ENCODE measurements at regions of chr2 and their contacts with region 1.

Region 1: DNA sequence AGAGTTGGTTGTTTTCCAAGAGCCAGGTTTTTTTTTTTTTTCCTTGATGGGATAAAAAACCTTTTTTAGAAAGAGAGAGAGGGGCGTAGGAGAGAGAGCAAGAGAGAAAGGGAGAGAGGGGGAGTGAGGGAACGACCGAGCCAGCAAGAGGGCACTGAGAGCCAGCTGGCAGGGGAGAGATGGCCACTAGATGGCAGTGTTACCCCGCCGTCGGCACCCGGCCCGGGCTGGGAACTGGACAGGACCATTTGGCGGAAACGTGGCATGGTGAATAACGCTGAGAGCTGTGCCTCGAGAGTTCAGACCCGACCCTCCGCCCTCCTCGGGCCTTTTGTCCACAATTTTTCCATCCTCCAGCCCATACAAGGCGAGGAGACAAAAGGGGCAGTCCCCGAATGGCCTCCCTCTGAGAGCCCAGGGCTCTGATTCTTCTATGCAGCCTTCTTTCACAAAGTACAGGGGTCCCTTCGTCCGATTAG is 286.7 kb upstream of the VRK2 start:
- DNase-seq: peak; percentile 61
- CTCF ChIP-seq: peak; percentile 95

Region 2: GRCh38 chr2:57890464-57890863 is 130.6 kb after region 1 on chr2:
- in situ Hi-C with region 1: loop called (anchors 10 kb)
- DNase-seq: no peak
- CTCF ChIP-seq: no peak

Measured in GM13977 (cell line).